ENCODE measurements at regions of chr20 and their contacts with region 1.

Region 1: DNA sequence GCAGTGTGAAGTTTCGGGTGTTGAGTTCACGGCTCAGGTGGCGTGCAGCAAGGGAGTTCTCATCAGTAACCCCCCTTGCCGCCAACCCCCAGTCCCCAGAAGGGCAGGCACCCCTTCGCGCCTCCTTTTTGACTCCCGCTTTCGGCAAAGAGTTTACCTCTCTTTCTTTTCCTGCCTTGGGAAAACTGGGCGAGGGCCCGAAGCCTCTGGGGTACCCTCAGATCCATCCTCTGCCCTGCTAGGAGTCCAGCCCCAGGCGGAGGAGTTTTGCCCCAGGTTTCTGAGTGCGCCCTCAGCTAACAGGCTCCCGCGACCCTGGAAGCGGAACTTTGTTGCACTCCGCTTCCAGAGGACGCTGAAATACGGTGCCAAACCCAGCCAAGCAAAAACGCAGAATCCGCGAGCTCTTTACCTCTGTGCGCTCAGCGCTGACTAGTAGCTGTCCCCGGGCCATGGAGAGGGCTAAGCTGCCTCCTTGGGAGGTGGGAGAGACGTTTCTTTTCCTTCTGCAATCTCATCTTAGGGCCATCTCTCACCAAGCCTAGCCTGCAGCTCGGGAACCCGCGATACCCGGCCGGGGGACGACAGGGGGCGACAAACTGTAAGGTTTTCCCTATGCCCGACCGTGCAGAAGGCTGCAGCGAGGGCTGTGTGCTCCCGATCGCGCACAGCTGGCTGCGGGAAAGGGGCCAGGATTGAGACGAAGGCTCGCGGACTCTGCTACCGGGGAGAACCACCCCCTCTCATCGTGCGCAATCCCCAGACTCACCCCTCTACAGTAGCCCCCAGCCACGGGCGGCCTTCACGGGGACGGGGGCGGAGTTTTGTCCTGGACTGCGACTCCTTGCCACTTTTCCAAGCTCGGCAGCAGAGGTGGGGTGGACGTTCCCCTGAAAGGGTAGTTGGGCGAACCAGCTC is 2.7 kb upstream of the PAX1 start:
- DNase-seq: peak; percentile 80
- H3K4me3 ChIP-seq: peak overlapping the region in 3 of 4 donors; percentile 10 to 21 (median 16)
- H3K27ac ChIP-seq: no peak overlapping the region
- H3K4me1 ChIP-seq: peaks cover 0 to 33% (median 28%) of the 10 kb centered on the region in 4 donors
- H3K27me3 ChIP-seq: peaks cover 54 to 100% (median 88%) of the 10 kb centered on the region in 3 donors
- CTCF ChIP-seq: peak; percentile 26 to 54 (median 38)
- EP300 ChIP-seq: no peak
- POLR2A ChIP-seq: no peak

Region 2: GRCh38 chr20:22312744-22313346 is 610.0 kb after region 1 on chr20:
- intact Hi-C with region 1: loop called (anchors 5 kb)
- DNase-seq: no peak
- H3K4me3 ChIP-seq: no peak overlapping the region
- H3K27ac ChIP-seq: no peak overlapping the region
- H3K4me1 ChIP-seq: no peaks in the 10 kb centered on the region
- H3K27me3 ChIP-seq: peaks cover 0 to 5% (median 0%) of the 10 kb centered on the region in 3 donors
- CTCF ChIP-seq: peak in 3 of 4 experiments; percentile 14 to 66 (median 45)
- EP300 ChIP-seq: no peak
- POLR2A ChIP-seq: no peak

Measured in sigmoid colon (tissue), 7 donors.